AG04449 (cell line): ENCODE measurements at regions of chr5 and their contacts with region 1.

Region 1: GRCh38 chr5:111550279-111551020 is 38.1 kb upstream of the STARD4 start:
- DNase-seq: peak; percentile 92
- H3K4me3 ChIP-seq: no peak overlapping the region
- CTCF ChIP-seq: peak; percentile 46

Region 2: DNA sequence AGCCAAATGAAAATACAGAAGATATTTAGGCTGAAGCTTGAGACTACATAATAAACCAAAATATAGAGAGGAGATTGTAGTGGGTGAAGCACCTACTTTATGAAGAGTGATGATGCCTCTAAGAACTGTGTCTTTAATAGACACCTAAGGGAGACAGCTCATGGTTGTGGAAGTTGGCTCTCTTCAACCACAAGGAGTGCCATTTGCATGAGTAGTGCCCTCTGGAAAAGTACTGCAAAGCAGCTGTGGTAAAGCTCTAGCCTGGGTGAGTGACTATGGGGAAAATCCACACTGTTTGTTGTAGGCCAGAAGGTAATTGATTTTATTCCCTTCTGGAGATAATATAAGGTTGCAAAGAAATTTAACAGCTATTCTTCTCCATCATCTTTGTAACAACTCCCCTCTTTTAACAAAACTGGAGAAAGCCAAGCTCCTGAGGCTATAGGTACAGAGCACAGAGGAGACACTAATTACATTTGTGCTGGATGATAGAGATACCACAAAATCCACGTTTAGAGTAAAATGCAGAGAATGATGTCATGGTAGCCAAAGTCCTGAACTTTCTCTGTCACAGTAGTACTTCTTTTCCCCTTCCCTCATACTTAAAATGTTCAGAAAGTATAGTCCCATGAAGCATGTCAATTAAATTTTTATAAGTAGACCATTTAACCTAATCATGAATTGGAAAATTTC is 160.9 kb before region 1 on chr5:
- CTCF ChIA-PET with region 1: no interaction called
- POLR2A ChIA-PET with region 1: no interaction called
- DNase-seq: peak; percentile 51
- H3K4me3 ChIP-seq: no peak overlapping the region
- CTCF ChIP-seq: no peak

Region 3: GRCh38 chr5:111537141-111538024 is 13.1 kb before region 1 on chr5:
- CTCF ChIA-PET with region 1: interaction called, 34 read pairs
- POLR2A ChIA-PET with region 1: no interaction called
- DNase-seq: no peak
- H3K4me3 ChIP-seq: no peak overlapping the region
- CTCF ChIP-seq: no peak

Region 4: GRCh38 chr5:111726986-111727385 is 176.5 kb after region 1 on chr5:
- CTCF ChIA-PET with region 1: interaction called, 23 read pairs
- POLR2A ChIA-PET with region 1: no interaction called
- DNase-seq: no peak
- H3K4me3 ChIP-seq: no peak overlapping the region
- CTCF ChIP-seq: no peak

Region 5: GRCh38 chr5:111742177-111742994 is 191.9 kb after region 1 on chr5:
- CTCF ChIA-PET with region 1: interaction called, 11 read pairs
- POLR2A ChIA-PET with region 1: interaction called, 3 read pairs
- DNase-seq: peak; percentile 83
- H3K4me3 ChIP-seq: no peak overlapping the region
- CTCF ChIP-seq: no peak

Region 6: DNA sequence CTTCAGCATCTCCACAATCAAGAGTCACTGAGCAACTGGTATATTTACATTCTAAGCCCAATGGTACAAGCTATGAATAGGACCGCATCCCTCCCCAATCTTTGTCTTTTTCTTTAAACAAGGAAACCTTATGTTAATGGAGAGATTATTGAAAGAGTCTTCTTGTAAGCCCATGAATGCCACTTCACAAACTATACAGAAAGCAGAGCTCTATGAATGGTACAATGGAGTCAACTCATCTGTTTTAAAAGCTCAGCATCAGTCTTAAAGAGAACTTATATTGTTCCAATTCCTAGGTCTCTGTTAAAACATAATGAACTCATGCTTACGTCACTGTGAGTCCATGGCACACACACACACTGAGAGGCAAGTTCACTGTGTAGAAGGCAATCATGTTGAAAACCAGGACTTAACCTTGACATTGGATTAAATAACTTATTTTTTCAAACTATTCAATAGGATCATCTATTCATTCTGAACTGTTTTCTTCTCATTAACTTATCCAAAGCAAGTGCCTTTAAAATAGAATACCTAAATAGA is 202.0 kb after region 1 on chr5:
- CTCF ChIA-PET with region 1: interaction called, 16 read pairs
- POLR2A ChIA-PET with region 1: interaction called, 4 read pairs
- DNase-seq: no peak
- H3K4me3 ChIP-seq: no peak overlapping the region; the same call in 1 of the 2 replicates
- CTCF ChIP-seq: no peak

Region 7: GRCh38 chr5:112146323-112147226 is 596.1 kb after region 1 on chr5:
- CTCF ChIA-PET with region 1: interaction called, 19 read pairs
- POLR2A ChIA-PET with region 1: interaction called, 3 read pairs
- DNase-seq: peak; percentile 65
- H3K4me3 ChIP-seq: no peak overlapping the region
- CTCF ChIP-seq: peak; percentile 50

Region 8: GRCh38 chr5:112160652-112161391 is 610.4 kb after region 1 on chr5:
- CTCF ChIA-PET with region 1: interaction called, 23 read pairs
- POLR2A ChIA-PET with region 1: interaction called, 4 read pairs
- DNase-seq: peak; percentile 40
- H3K4me3 ChIP-seq: peak overlapping the region; percentile 95
- CTCF ChIP-seq: peak; percentile 100